ENCODE measurements at regions of chrX and their contacts with region 1.

Region 1: DNA sequence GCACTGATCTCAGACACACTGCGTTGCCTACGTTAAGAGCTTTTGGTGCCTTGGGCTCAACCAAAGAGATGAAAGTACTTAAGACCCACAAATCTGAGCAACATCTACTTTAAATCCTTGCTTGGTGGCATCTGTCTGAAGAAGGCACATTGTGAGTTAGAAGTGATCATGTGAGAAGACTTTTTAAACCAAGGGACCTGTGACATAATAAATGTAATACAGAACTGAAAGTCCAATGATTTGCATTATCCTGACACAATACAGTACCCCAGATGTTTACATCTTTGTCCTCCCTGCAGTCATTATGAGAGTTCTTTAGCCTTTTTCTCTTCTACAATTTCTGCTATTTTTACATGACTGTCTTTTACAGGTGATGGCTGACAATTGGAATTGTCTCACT is 96.7 kb upstream of the FTHL17 start:
- DNase-seq: peak; percentile 51
- ATAC-seq: peak; percentile 92
- H3K4me3 ChIP-seq: no peak overlapping the region
- H3K27ac ChIP-seq: peak overlapping the region; percentile 20; the same call in 1 of the 2 replicates
- H3K4me1 ChIP-seq: peaks cover 10% of the 10 kb centered on the region
- H3K27me3 ChIP-seq: no peaks in the 10 kb centered on the region
- CTCF ChIP-seq: no peak
- EP300 ChIP-seq: peak; percentile 59 to 77; a peak in 2 of 4 replicates
- POLR2A ChIP-seq: no peak
- RAD21 ChIP-seq: no peak

Region 2: DNA sequence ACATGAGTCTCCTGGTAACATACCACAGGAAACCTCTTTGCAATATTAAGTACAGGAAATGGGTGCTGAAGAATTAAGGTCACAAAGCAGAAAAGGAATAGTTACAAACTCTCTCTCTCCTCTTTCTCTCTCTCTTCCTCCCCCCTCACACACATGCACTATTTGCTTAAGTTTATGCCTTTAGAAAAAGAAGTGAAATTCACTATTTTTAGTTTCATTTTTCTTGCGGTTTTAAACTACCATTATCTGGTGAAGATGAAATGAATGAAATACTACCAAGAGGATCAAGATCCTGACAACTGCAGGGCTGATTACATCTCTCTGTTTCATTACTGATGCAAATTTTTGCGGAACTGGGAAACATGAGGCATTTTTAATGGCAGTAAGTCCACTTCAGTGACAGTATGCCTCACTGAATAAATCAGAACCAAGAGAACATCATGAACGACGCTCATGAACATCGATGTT is 32.4 kb before region 1 on chrX:
- CTCF ChIA-PET with region 1: interaction called, 3 read pairs
- POLR2A ChIA-PET with region 1: no interaction called
- RAD21 ChIA-PET with region 1: no interaction called
- SMC1A ChIA-PET with region 1: interaction called, 3 read pairs
- in situ Hi-C with region 1: no loop called
- intact Hi-C with region 1: loop called (anchors 2 kb)
- DNase-seq: peak; percentile 82
- ATAC-seq: peak; percentile 94
- H3K4me3 ChIP-seq: no peak overlapping the region
- H3K27ac ChIP-seq: peak overlapping the region; percentile 63
- H3K4me1 ChIP-seq: peaks cover 11% of the 10 kb centered on the region
- H3K27me3 ChIP-seq: no peaks in the 10 kb centered on the region
- CTCF ChIP-seq: no peak
- EP300 ChIP-seq: peak; percentile 63 to 87; a peak in 2 of 4 replicates
- POLR2A ChIP-seq: no peak
- RAD21 ChIP-seq: no peak

Region 3: DNA sequence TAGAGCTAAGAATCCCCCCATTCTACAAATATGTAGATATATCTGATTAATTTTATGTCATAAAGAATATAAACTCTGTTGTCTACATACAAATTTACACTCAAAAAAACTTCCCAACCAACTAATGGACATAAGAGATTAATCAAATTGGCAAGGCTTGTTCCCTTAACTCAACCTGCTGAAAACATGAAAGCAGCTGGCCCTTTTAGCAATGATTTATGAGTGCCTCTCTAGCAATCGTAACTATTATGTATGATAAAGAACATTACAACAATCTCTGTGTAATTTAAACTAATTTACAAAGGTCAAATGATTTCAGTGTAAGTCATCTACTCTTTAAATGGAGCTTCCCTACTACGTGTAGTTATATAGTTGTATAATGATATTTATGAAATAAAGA is 13.6 kb before region 1 on chrX:
- CTCF ChIA-PET with region 1: interaction called, 10 read pairs
- POLR2A ChIA-PET with region 1: no interaction called
- RAD21 ChIA-PET with region 1: no interaction called
- SMC1A ChIA-PET with region 1: interaction called, 4 read pairs
- in situ Hi-C with region 1: no loop called
- intact Hi-C with region 1: no loop called
- DNase-seq: no peak
- ATAC-seq: no peak
- H3K4me3 ChIP-seq: no peak overlapping the region
- H3K27ac ChIP-seq: no peak overlapping the region
- H3K4me1 ChIP-seq: no peaks in the 10 kb centered on the region
- H3K27me3 ChIP-seq: no peaks in the 10 kb centered on the region
- CTCF ChIP-seq: no peak
- EP300 ChIP-seq: no peak
- POLR2A ChIP-seq: no peak
- RAD21 ChIP-seq: no peak

Region 4: DNA sequence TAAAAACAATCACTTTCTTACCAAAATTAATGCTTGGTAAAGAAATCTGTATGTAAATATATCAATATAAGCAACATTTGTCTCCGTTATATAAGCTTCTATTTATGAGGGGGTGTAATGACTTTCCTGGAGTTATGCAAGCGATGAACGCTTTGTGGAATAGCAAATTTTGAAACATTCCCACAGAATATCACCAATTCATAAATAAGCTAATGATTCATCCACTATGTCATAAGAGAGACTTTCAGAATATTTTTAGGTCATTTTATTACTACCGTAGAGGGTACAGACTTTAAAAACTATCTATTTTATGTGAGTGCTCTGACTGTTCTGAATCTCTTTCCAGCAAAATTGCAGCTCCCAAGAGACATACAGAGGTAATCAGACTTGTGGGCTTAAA is 82.8 kb after region 1 on chrX:
- CTCF ChIA-PET with region 1: no interaction called
- POLR2A ChIA-PET with region 1: no interaction called
- RAD21 ChIA-PET with region 1: no interaction called
- SMC1A ChIA-PET with region 1: no interaction called
- in situ Hi-C with region 1: no loop called
- intact Hi-C with region 1: no loop called
- DNase-seq: no peak
- ATAC-seq: no peak
- H3K4me3 ChIP-seq: no peak overlapping the region
- H3K27ac ChIP-seq: no peak overlapping the region
- H3K4me1 ChIP-seq: no peaks in the 10 kb centered on the region
- H3K27me3 ChIP-seq: no peaks in the 10 kb centered on the region
- CTCF ChIP-seq: no peak
- EP300 ChIP-seq: no peak
- POLR2A ChIP-seq: no peak
- RAD21 ChIP-seq: no peak

Measured in GM12878 (cell line).